ENCODE measurements at regions of chr13 and their contacts with region 1.

Region 1: GRCh38 chr13:52405767-52406494 is at the start of gene THSD1:
- DNase-seq: peak; percentile 44
- H3K27ac ChIP-seq: peak within 1 kb of the TSS; percentile 90
- CTCF ChIP-seq: no peak

Region 2: DNA sequence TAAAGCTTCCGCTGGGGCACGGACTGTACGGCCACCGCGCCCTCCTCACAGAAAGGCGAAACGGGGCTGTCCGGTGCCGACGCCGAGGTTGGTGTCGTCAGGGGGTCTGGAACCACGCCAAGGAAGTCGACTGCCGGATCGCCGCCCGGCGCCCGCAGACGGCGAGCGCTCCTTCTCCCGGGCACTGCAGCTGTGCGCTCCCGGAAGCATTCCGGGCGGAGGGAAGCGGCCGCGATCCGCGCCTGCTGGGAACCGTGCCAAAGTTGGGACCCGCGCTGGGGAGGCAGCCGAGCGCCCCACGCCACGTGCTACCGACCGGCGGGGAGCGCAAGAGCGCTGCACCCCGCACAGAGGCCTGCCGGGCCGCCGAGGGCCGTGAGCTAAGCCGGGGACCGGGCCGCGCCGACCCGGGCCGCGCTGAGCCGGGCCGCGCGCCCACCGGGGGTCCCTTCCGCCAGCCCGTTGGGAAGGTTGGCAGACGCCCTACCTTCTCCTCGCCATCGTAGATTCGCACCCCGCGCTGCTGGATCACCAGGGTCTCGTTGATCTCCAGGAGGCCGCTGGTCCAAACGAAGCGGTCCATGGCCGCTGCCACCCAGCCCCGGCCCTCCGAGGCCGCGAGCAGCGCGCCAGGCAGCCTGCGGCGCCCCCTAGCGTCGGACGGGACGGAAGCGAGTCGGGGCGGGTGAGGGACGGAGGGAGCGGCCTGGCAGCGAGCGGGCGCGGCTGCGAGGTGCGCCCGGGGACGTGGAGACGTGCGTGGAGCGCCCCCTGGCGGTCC is 44.3 kb after region 1 on chr13 and contains the start of gene VPS36:
- CTCF ChIA-PET with region 1: interaction called, 11 read pairs
- POLR2A ChIA-PET with region 1: no interaction called
- DNase-seq: peak; percentile 85
- H3K27ac ChIP-seq: peak within 1 kb of the TSS; percentile 94
- CTCF ChIP-seq: peak; percentile 99